Activated B cell treated with CpG ODN at 0.5 μM for 24 hours (primary cell): ENCODE measurements at regions of chr17 and their contacts with region 1.

Region 1: GRCh38 chr17:78250891-78251794 is 19.7 kb downstream of the TMEM235 start:
- DNase-seq: peak; percentile 82
- ATAC-seq: peak; percentile 81
- H3K4me3 Mint-ChIP-seq: no peak overlapping the region
- H3K27ac Mint-ChIP-seq: no peak overlapping the region
- H3K4me1 Mint-ChIP-seq: peaks cover 34% of the 10 kb centered on the region
- H3K27me3 Mint-ChIP-seq: no peaks in the 10 kb centered on the region
- CTCF ChIP-seq: peak; percentile 78

Region 2: GRCh38 chr17:78019367-78019975 is 231.7 kb before region 1 on chr17:
- CTCF ChIA-PET with region 1: interaction called, 15 read pairs
- POLR2A ChIA-PET with region 1: interaction called, 4 read pairs
- intact Hi-C with region 1: loop called (anchors 1 kb)
- DNase-seq: no peak
- ATAC-seq: no peak
- H3K4me3 Mint-ChIP-seq: no peak overlapping the region
- H3K27ac Mint-ChIP-seq: no peak overlapping the region
- H3K4me1 Mint-ChIP-seq: peaks cover 7% of the 10 kb centered on the region
- H3K27me3 Mint-ChIP-seq: no peaks in the 10 kb centered on the region
- CTCF ChIP-seq: no peak

Region 3: DNA sequence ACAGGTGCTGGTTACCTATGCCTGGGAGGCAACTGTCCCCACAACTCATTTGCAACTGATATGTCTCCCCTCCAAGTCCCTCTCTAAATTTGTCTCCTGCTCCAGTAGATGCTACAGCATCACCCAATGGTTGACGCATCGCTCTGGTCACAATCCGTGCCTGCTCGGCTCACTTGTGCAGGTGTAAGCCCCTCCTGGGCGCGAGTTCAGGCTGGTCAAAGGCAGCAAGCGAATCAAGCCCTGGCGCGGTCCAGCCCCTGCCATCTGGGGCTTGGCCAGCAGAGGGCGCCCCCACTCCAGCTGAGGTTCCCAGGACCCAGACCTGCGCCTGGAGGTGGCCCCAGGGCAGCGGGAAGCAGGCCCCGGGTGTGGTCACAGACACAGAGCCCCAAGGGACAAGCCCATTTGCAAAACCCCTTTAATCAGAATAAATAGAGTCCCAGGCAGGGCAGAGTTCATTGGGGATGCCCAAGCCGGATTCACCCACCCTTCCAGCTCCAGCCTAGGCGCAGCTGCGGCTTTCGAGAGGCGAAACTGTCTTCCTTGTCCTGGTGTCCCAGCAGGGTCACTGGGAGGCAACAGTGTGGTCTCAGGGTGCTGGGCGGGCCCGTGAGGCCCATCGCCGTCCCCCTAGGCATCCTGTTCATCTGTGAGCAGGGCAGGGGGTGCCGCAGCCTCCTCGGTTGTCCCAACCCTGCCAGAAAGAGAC is 138.5 kb before region 1 on chr17:
- CTCF ChIA-PET with region 1: interaction called, 20 read pairs
- POLR2A ChIA-PET with region 1: interaction called, 5 read pairs
- intact Hi-C with region 1: loop called (anchors 1 kb)
- DNase-seq: peak; percentile 89
- ATAC-seq: peak; percentile 79
- H3K4me3 Mint-ChIP-seq: no peak overlapping the region
- H3K27ac Mint-ChIP-seq: peak overlapping the region; percentile 80
- H3K4me1 Mint-ChIP-seq: peaks cover 26% of the 10 kb centered on the region
- H3K27me3 Mint-ChIP-seq: no peaks in the 10 kb centered on the region
- CTCF ChIP-seq: peak; percentile 55

Region 4: DNA sequence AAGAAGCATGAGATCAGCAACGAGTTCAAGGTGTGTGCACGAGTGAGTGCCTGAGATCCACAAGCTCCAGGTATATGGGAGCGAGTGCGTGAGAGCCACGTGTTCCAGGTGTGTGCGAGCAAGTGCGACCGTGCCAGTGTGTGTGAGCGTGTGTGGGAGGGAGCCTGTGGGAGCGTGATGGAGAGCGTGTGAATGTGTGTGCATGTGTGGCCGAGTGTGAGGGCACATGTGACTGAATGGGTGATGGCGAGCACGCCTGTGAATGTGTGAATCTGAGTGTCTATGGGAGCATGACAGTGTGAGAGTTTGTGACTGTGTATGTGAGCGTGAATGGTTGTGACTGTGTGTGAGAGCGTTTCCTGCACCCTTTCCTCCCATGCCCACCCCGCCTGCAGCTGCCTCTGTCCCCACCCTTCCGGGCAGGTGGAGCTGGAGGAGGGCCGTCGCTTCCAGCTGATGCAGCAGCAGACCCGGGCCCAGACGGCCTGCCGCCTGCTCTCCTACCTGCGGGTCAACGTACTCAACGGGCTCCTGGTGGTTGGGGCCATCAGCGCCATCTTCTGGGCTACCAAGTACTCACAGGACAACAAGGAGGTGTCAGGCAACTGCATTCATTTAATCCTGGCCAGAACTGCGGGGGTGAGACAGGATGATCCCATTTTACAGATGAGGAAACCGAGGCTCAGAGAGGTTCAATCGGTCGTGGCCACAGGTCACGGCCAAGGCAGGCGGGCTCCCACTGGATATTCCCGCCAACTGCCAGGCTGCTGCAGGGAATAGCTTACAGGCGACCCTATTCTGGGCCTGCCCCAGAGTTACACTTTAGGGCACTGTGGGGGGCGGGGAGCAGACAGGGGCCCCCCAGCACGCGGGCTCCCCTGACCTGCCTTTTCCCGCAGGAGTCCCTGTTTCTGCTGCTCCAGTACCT is 116.9 kb before region 1 on chr17:
- CTCF ChIA-PET with region 1: interaction called, 4 read pairs
- POLR2A ChIA-PET with region 1: interaction called, 3 read pairs
- intact Hi-C with region 1: loop called (anchors 5 kb)
- DNase-seq: peak; percentile 59
- ATAC-seq: peak; percentile 15
- H3K4me3 Mint-ChIP-seq: peak overlapping the region; percentile 95
- H3K27ac Mint-ChIP-seq: peak overlapping the region; percentile 81
- H3K4me1 Mint-ChIP-seq: peaks cover 87% of the 10 kb centered on the region
- H3K27me3 Mint-ChIP-seq: no peaks in the 10 kb centered on the region
- CTCF ChIP-seq: peak; percentile 69

Region 5: DNA sequence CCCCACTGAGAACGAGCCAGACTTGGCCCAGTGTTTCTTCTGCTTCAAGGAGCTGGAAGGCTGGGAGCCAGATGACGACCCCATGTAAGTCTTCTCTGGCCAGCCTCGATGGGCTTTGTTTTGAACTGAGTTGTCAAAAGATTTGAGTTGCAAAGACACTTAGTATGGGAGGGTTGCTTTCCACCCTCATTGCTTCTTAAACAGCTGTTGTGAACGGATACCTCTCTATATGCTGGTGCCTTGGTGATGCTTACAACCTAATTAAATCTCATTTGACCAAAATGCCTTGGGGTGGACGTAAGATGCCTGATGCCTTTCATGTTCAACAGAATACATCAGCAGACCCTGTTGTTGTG is 36.5 kb before region 1 on chr17:
- CTCF ChIA-PET with region 1: no interaction called
- POLR2A ChIA-PET with region 1: interaction called, 4 read pairs
- intact Hi-C with region 1: loop called (anchors 1 kb)
- DNase-seq: no peak
- ATAC-seq: no peak
- H3K4me3 Mint-ChIP-seq: peak overlapping the region; percentile 48
- H3K27ac Mint-ChIP-seq: no peak overlapping the region
- H3K4me1 Mint-ChIP-seq: peaks cover 7% of the 10 kb centered on the region
- H3K27me3 Mint-ChIP-seq: no peaks in the 10 kb centered on the region
- CTCF ChIP-seq: no peak

Region 6: GRCh38 chr17:78289802-78290363 is 38.7 kb after region 1 on chr17:
- CTCF ChIA-PET with region 1: no interaction called
- POLR2A ChIA-PET with region 1: interaction called, 6 read pairs
- intact Hi-C with region 1: loop called (anchors 1 kb)
- DNase-seq: peak; percentile 61
- ATAC-seq: peak; percentile 99
- H3K4me3 Mint-ChIP-seq: no peak overlapping the region
- H3K27ac Mint-ChIP-seq: no peak overlapping the region
- H3K4me1 Mint-ChIP-seq: peaks cover 3% of the 10 kb centered on the region
- H3K27me3 Mint-ChIP-seq: no peaks in the 10 kb centered on the region
- CTCF ChIP-seq: no peak

Region 7: GRCh38 chr17:78343187-78343542 is 92.0 kb after region 1 on chr17:
- CTCF ChIA-PET with region 1: no interaction called
- POLR2A ChIA-PET with region 1: no interaction called
- intact Hi-C with region 1: no loop called
- DNase-seq: peak; percentile 37
- ATAC-seq: peak; percentile 13
- H3K4me3 Mint-ChIP-seq: peak overlapping the region; percentile 66
- H3K27ac Mint-ChIP-seq: peak overlapping the region; percentile 89
- H3K4me1 Mint-ChIP-seq: peaks cover 83% of the 10 kb centered on the region
- H3K27me3 Mint-ChIP-seq: no peaks in the 10 kb centered on the region
- CTCF ChIP-seq: no peak

Region 8: DNA sequence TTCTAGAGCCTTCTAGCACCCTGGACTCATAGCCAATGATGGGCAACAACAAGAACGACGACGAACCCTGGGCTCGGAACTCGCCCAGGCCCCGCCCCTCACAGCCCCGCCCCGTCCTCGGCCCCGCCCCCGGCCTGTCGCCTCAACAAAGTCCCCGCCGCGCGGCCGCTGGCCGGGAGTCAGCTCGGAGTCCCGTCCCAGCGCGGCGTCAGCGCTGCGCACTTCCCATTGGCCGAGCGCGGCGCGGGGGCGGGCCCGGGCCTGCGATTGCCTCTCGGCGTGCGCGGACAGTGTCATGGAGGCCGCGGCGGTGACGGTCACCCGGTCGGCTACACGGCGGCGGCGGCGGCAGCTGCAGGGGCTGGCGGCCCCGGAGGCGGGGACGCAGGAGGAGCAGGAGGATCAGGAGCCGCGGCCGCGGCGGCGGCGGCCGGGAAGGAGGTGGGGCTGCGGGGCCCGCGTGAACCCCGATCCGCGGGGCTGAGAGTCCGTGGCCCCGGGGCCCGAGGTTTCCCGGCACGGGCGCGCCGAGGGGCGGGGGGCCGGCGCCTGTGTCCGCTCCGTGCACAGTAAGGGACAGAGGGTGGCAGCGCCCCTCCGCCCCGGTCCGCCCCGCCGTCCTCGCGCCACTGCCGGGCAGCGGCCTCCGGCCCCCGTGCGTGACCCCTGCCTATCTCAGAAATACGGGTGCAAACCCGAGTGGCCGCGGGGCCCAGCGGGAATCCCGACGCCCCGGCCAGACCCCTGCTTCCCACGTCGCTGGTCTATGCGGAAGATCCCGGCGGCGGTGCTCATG is 823.7 kb after region 1 on chr17 and contains the start of gene ENGASE:
- CTCF ChIA-PET with region 1: no interaction called
- POLR2A ChIA-PET with region 1: no interaction called
- intact Hi-C with region 1: no loop called
- DNase-seq: peak; percentile 90
- ATAC-seq: peak; percentile 97
- H3K4me3 Mint-ChIP-seq: peak within 1 kb of the TSS; percentile 85
- H3K27ac Mint-ChIP-seq: peak within 1 kb of the TSS; percentile 69
- H3K4me1 Mint-ChIP-seq: peaks cover 15% of the 10 kb centered on the region
- H3K27me3 Mint-ChIP-seq: peaks cover 4% of the 10 kb centered on the region
- CTCF ChIP-seq: no peak
- total RNA-seq, gene ENGASE: 55.0 and 60.1 TPM in 2 replicates